Posterior vena cava (tissue), 2 donors: ENCODE measurements at regions of chr7 and their contacts with region 1.

Region 1: GRCh38 chr7:132402751-132403245 is 173.5 kb downstream of the PLXNA4 start:
- DNase-seq: peak; percentile 79

Region 2: GRCh38 chr7:130804220-130804619 is 1598.6 kb before region 1 on chr7:
- intact Hi-C with region 1: no loop called
- DNase-seq: no peak

Region 3: GRCh38 chr7:132359743-132360142 is 43.1 kb before region 1 on chr7:
- intact Hi-C with region 1: no loop called
- DNase-seq: no peak

Region 4: DNA sequence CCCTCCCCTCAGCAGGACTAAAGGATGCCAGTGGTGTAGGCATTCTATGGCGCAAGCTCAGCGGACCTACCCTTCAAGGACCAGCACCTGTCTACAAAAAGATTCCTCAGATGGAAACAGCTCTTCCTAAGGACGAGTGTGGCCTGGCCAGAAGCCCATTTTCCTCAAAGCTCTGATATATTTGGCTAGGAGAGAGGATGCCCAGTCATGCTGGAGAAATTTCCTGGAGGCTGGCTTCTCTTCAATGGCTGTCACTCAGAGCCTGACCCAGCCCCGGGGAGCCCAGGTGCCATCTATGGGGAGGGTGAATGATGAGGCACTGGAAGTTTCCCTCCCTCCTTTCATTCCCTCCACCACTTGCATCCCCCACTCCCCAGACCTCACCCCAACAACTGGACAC is 61.9 kb after region 1 on chr7:
- intact Hi-C with region 1: loop called in 1 of 2 experiments (anchors 10 kb)
- DNase-seq: no peak

Region 5: GRCh38 chr7:132537456-132538341 is 134.9 kb after region 1 on chr7:
- intact Hi-C with region 1: no loop called
- DNase-seq: no peak